Posterior vena cava (tissue), 2 donors: ENCODE measurements at regions of chr2 and their contacts with region 1.

Region 1: DNA sequence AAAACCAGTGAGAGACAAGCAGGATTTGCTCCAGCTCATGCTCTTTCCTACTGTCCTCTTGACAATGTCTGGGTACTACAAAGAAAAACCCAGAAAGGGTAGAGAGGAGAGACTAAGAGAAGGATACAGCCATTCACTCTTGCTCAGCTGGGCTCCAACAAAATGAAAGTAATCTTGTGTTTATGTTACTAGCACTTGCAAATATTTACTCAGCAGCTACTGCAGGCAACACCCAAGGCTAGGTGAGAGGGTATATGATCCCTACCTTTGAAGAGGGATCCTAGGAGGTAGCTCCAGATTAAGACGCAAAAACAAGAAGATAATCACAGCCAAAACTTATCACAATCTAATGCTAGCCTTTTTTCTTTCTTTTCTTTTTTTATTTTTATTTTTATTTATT is 329.6 kb upstream of the ACVR2A start:
- DNase-seq: no peak

Region 2: DNA sequence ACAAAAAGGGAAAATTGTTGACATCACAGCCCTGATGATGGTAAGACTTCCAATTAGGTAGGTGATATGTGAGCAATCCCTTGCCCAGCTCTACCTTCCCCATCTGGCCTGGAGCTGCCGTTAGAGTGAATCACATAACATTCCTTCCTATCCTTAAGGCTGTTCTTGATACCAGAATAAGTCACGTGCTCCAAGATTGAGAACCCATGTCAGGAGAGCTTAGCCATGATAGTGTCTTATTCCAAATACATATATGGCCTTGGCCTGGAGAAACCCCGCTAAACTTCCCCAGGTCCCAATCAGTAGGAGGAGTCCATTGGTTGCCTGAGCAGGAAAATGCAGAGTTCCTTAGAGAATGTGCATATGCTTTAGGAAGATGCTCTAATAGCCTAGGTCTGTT is 259.6 kb after region 1 on chr2:
- intact Hi-C with region 1: loop called in 1 of 2 experiments (anchors 5 kb)
- DNase-seq: no peak